ENCODE measurements at regions of chr10 and their contacts with region 1.

Region 1: DNA sequence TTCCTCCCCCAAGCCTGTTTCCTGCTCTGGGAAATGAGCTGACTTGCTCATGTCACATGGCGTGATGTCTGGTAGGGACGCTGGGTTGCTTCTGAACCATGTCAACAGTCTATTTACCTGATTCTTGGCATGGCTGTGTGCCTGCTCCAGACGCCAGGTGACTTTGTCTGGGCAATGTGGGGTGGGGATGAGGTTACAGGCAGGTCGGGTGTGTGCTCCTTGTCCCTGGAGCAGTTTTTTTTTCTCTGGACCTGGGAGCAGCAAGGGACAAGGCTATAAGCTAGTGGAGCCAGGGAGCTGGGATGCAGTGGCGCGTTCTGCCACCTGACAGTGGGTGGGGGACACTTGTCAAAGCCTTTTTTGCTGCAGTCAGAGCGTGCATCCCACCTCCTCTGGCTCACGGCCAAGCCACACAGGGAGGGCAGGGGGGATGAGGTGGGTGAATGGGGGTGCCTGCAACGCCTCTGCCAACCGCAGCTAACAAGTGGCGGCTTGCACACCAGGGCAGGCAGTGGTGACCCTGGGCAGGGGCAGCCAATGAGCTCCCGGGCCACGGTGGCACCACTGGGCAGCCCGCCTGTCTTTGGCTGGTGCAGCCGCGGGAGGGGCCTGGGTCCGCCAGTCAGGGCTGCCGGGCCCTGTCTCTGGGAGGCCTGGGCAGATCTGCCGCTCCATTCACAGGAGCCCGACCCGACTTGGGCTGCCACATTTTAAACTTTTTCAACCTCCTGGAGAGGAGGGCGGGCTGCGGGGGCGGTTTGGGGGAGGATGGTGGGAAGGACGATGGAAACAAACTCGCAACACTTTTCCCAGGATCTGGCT is 22.9 kb downstream of the DNAJB12 start:
- DNase-seq: peak; percentile 86
- H3K4me3 ChIP-seq: no peak overlapping the region
- H3K27ac ChIP-seq: peak overlapping the region; percentile 80 to 86 (median 82)
- H3K4me1 ChIP-seq: peaks cover 46 to 81% (median 58%) of the 10 kb centered on the region in 4 donors
- H3K27me3 ChIP-seq: no peaks in the 10 kb centered on the region
- CTCF ChIP-seq: peak; percentile 27 to 87 (median 42)
- EP300 ChIP-seq: no peak
- POLR2A ChIP-seq: peak; percentile 50

Region 2: GRCh38 chr10:72069751-72070526 is 261.9 kb before region 1 on chr10:
- in situ Hi-C with region 1: loop called in 2 of 4 experiments (anchors 25 kb)
- intact Hi-C with region 1: no loop called
- DNase-seq: no peak
- H3K4me3 ChIP-seq: no peak overlapping the region
- H3K27ac ChIP-seq: no peak overlapping the region
- H3K4me1 ChIP-seq: no peaks in the 10 kb centered on the region
- H3K27me3 ChIP-seq: no peaks in the 10 kb centered on the region
- CTCF ChIP-seq: no peak
- EP300 ChIP-seq: no peak
- POLR2A ChIP-seq: no peak

Region 3: GRCh38 chr10:72162978-72163377 is 168.8 kb before region 1 on chr10:
- in situ Hi-C with region 1: no loop called
- intact Hi-C with region 1: no loop called
- DNase-seq: no peak
- H3K4me3 ChIP-seq: no peak overlapping the region
- H3K27ac ChIP-seq: no peak overlapping the region
- H3K4me1 ChIP-seq: no peaks in the 10 kb centered on the region
- H3K27me3 ChIP-seq: no peaks in the 10 kb centered on the region
- CTCF ChIP-seq: no peak
- EP300 ChIP-seq: no peak
- POLR2A ChIP-seq: no peak

Region 4: DNA sequence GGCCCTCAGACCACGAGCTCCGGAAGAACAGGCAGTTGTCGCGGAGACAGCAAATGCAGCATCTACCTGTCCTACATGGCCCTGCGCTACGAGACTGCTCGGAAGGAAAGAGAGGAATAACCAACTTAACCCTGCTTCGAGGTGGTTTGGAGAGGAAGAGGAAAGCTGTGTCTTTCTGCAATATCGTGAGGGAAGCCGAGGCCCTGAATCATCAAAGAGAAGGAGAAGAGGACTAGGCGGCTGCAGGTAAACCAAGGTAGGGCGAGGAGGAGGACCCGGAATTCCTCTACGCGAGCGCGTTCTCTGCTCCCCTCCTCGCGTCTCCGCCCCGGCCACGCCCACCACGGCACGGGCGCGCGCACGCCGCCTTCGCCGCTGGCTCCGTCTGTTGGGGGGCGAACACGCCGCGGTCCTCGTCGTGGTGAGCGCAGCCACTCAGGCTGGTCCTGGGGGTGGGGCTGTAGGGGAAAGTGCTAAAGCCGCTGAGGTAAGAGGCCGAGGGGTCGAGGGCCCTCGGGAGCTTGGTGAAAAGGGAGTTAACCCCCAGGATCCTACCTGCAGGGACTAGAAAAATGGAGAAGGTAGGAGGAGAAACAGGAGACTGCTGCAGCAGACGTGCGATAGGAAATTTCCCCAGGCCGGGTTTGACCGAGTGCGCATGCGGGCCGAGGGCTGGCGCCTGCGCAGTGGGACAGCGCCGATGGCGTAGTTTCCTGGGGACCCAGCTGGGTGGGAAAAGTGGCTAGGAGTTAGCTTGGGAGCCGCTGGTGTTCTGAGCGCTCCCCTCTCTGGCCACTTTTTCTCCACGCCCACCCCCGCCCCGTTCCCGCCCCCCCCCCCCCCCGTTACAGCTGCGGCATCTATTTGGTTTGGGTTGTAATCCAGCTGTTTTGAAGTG is 115.9 kb before region 1 on chr10 and contains the starts of genes ANAPC16 and ASCC1:
- in situ Hi-C with region 1: loop called in 2 of 4 experiments (anchors 10 to 25 kb)
- intact Hi-C with region 1: loop called (anchors 5 kb)
- DNase-seq: peak; percentile 94
- H3K4me3 ChIP-seq: peak within 1 kb of the TSS; percentile 56 to 89 (median 64)
- H3K27ac ChIP-seq: peak within 1 kb of the TSS; percentile 98 to 99 (median 98)
- H3K4me1 ChIP-seq: peaks cover 18 to 46% (median 33%) of the 10 kb centered on the region in 4 donors
- H3K27me3 ChIP-seq: no peaks in the 10 kb centered on the region
- CTCF ChIP-seq: peak in 1 of 5 experiments; percentile 26
- EP300 ChIP-seq: no peak
- POLR2A ChIP-seq: peak; percentile 96
- total RNA-seq, gene ANAPC16: 57.6 to 77.4 (median 65.5) TPM
- total RNA-seq, gene ASCC1: 13.4 to 34.0 (median 20.5) TPM

Region 5: DNA sequence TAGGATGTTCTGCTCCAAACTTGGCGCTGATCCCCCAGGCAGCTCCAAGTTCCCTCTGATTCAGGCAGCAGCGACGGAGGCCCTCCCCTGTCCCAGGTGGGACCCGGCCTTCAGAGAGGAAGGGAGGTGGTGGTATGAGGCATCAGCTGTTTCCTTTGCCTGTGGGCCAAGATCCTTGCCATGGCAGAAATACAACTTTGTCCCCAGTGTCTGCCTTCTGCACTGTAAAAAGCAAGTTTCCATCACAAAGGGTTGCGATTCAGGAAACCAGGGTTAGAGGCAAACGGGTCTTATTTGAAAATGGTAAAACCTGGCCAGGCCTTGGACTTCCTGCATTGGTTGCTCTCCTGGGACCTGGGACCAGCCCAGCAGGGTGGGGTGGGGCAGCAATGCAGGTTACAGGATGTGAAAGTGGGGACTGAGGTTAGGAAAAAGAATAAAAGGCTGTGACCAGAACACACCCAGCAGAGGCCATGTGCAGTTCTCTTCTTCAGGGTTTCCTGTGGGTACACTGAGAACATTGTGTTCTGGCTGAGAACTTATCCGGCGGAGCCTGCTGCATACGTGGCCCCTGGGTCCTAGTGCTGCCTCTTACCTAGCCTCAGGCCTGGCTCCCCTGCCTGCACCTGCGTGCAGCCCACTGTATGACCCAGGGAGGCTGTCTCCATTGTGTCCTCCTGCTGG is 83.2 kb before region 1 on chr10:
- in situ Hi-C with region 1: loop called in 2 of 4 experiments (anchors 10 to 25 kb)
- intact Hi-C with region 1: no loop called
- DNase-seq: peak; percentile 90
- H3K4me3 ChIP-seq: peak overlapping the region in 1 of 4 donors; percentile 31
- H3K27ac ChIP-seq: peak overlapping the region; percentile 93 to 97 (median 94)
- H3K4me1 ChIP-seq: peaks cover 72 to 92% (median 84%) of the 10 kb centered on the region in 4 donors
- H3K27me3 ChIP-seq: no peaks in the 10 kb centered on the region
- CTCF ChIP-seq: no peak
- EP300 ChIP-seq: peak; percentile 99
- POLR2A ChIP-seq: peak; percentile 68

Region 6: GRCh38 chr10:73634421-73634820 is 1302.6 kb after region 1 on chr10:
- in situ Hi-C with region 1: no loop called
- intact Hi-C with region 1: no loop called
- DNase-seq: no peak
- H3K4me3 ChIP-seq: no peak overlapping the region
- H3K27ac ChIP-seq: no peak overlapping the region
- H3K4me1 ChIP-seq: no peaks in the 10 kb centered on the region
- H3K27me3 ChIP-seq: no peaks in the 10 kb centered on the region
- CTCF ChIP-seq: no peak
- EP300 ChIP-seq: no peak
- POLR2A ChIP-seq: no peak

Measured in transverse colon (tissue), 4 donors.